ENCODE measurements at regions of chr7 and their contacts with region 1.

Region 1: DNA sequence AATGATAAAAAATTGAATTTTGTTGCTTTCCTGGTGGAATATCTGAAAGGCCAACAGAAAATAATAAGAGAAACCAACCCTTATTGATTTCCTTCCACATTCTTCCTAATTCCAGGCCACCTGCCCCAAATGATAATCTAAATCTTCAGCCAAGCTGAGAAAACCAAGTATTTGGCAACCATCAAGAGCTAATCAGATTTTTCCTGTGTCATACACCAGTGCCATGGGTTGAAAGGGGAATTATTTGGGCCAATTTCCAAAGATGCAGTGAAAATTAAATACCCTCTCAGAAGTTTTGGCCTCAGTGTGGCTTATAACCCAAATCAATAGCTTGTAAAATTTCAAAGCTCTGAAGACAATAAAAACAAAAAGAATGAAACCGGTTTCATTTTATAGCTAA is 70.4 kb downstream of the DOCK4 start:
- DNase-seq: no peak
- H3K4me3 ChIP-seq: no peak overlapping the region
- H3K4me3 Mint-ChIP-seq: no peak overlapping the region
- H3K27ac Mint-ChIP-seq: no peak overlapping the region
- H3K4me1 ChIP-seq: no peaks in the 10 kb centered on the region
- H3K4me1 Mint-ChIP-seq: no peaks in the 10 kb centered on the region
- H3K27me3 ChIP-seq: no peaks in the 10 kb centered on the region
- H3K27me3 Mint-ChIP-seq: no peaks in the 10 kb centered on the region
- CTCF ChIP-seq: no peak

Region 2: GRCh38 chr7:112103246-112103645 is 32.6 kb before region 1 on chr7:
- CTCF ChIA-PET with region 1: no interaction called
- POLR2A ChIA-PET with region 1: no interaction called
- intact Hi-C with region 1: loop called (anchors 1 kb)
- DNase-seq: no peak
- H3K4me3 ChIP-seq: no peak overlapping the region
- H3K4me3 Mint-ChIP-seq: no peak overlapping the region
- H3K27ac Mint-ChIP-seq: no peak overlapping the region
- H3K4me1 ChIP-seq: no peaks in the 10 kb centered on the region
- H3K4me1 Mint-ChIP-seq: no peaks in the 10 kb centered on the region
- H3K27me3 ChIP-seq: no peaks in the 10 kb centered on the region
- H3K27me3 Mint-ChIP-seq: no peaks in the 10 kb centered on the region
- CTCF ChIP-seq: no peak

Measured in Caco-2 (cell line).